ENCODE measurements at regions of chr4 and their contacts with region 1.

Region 1: DNA sequence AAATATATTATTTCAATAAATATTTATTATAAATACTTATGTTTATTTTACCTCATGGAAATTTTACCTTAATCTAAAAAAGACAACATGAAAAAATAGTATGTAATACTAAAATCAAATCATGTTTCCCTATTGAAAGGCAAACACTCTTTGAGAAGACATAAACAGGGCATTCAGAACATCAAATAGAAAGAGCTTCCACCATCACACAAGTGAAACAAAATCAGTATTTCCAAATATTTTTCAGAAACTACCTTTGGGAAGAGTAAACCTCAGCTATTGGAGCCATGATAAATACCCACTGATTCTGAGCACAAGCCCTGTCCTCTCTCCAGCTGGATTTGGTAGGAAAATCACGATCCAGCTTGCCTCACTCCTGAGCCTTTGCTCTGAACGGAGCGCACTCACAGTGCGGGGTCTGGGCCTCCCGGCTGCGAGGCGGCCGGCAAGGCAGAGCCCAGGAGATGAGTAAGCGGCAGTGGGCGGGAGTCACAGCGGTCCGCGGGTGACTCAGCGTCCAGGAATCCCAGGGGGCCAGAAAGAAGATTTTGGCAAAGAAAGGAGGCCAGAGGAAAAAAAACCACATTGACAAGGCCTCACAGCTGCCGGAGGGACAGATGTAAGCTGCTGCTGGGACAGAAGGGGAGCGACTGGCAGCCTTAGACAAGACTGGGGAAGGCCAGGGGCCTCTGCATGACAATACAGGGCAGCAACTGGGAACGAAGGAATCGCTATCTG is 14.7 kb upstream of the ANXA5 start:
- DNase-seq: no peak
- H3K4me3 Mint-ChIP-seq: no peak overlapping the region
- H3K27ac Mint-ChIP-seq: no peak overlapping the region
- H3K4me1 Mint-ChIP-seq: peaks cover 49% of the 10 kb centered on the region
- H3K27me3 Mint-ChIP-seq: peaks cover 50% of the 10 kb centered on the region

Region 2: DNA sequence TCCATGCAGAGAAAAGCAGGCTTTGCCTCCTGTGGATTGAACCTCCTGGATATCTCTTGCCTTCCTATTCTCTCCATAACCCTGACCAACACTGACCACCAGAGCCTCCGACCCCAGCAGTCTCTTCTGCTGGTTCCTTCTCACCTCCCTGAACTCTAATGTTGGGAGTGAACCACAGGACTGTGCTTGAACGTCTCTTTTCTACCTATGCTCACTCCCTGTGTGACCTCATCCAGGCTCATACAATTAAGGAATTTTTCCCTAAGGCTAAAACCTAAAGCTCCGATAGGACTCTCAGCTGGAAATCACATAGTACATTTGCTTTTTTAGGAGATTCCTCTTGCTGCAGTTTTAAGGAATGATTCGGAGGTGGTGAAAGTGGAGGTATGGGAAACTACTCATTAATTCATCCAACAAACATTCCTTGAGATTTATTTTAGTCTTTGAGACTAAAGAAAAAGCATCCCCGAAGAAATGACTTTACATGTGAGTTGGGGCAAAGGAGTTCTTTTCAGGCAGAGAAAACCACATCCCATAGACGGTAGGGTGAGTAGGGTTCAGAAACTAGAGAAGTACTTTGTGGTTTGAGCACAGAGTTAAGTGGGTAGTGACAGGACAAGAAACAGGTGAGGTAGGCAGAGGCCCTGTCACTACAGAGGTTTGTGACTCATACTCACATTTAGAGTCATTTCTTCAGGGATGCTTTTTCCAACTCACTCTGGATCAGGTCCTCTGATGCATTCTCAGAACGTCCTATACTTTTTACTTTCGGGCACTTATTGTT is 669.9 kb before region 1 on chr4:
- intact Hi-C with region 1: loop called (anchors 2 kb)
- DNase-seq: peak; percentile 16
- H3K4me3 Mint-ChIP-seq: no peak overlapping the region
- H3K27ac Mint-ChIP-seq: no peak overlapping the region
- H3K4me1 Mint-ChIP-seq: peaks cover 13% of the 10 kb centered on the region
- H3K27me3 Mint-ChIP-seq: peaks cover 46% of the 10 kb centered on the region

Region 3: DNA sequence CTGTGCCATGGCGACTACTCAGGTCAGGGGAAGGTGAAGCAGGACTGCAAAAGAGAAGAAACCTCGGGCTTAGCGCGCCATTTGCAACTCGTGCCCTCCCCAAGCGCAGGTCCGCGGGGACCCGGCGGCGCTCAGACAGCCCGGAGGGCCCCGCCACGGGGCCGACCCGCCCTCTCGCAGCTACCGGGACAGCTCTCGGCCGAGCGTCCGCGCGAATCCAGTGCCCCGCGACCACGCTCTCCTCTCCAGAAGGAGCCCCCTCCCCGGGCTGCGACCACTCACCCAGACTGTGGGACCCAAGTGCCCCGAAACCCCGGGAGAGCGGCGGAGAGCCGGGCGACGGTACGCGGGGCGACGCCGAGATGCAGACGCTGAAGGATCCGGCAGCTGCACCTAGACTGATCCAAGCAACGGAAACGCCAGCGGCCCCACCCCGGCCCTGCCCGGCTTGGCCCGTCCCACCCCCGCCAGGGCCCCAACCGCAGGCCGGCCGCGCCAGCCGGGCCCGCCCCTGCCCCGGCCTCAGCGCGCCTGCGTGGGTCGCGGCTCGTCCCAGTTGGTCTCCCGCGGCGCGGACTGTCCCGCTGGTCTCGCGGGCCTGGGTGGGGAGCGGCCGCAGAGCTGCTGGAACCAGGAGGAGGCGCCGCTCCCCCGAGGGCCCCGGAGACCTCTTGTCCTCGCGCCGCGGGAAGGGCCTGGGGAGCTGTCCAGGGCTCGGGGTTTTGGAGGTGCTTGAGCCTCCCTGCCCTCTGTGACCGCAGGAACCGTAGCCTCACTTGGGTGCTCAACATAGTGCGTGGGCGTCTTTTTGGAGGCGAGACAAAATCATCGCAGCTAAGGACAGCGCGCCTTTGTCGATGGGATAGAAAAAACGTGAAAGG is 14.6 kb before region 1 on chr4 and contains the start of gene ANXA5:
- intact Hi-C with region 1: loop called (anchors 1 kb)
- DNase-seq: peak; percentile 73
- H3K4me3 Mint-ChIP-seq: peak within 1 kb of the TSS; percentile 97
- H3K27ac Mint-ChIP-seq: peak within 1 kb of the TSS; percentile 97
- H3K4me1 Mint-ChIP-seq: peaks cover 35% of the 10 kb centered on the region
- H3K27me3 Mint-ChIP-seq: peaks cover 41% of the 10 kb centered on the region
- total RNA-seq, gene ANXA5: 105 and 107 TPM in 2 replicates

Region 4: GRCh38 chr4:121726642-121727268 is 15.3 kb after region 1 on chr4:
- intact Hi-C with region 1: loop called (anchors 1 kb)
- DNase-seq: no peak
- H3K4me3 Mint-ChIP-seq: no peak overlapping the region
- H3K27ac Mint-ChIP-seq: no peak overlapping the region
- H3K4me1 Mint-ChIP-seq: peaks cover 9% of the 10 kb centered on the region
- H3K27me3 Mint-ChIP-seq: peaks cover 6% of the 10 kb centered on the region